ENCODE measurements at regions of chr6 and their contacts with region 1.

Region 1: GRCh38 chr6:43608310-43608763 is 20.7 kb downstream of the GTPBP2 start:
- DNase-seq: peak; percentile 30
- ATAC-seq: peak; percentile 50
- H3K4me3 Mint-ChIP-seq: no peak overlapping the region
- H3K27ac Mint-ChIP-seq: peak overlapping the region; percentile 47
- H3K4me1 Mint-ChIP-seq: peaks cover 14% of the 10 kb centered on the region
- H3K27me3 Mint-ChIP-seq: no peaks in the 10 kb centered on the region
- CTCF ChIP-seq: peak; percentile 88

Region 2: DNA sequence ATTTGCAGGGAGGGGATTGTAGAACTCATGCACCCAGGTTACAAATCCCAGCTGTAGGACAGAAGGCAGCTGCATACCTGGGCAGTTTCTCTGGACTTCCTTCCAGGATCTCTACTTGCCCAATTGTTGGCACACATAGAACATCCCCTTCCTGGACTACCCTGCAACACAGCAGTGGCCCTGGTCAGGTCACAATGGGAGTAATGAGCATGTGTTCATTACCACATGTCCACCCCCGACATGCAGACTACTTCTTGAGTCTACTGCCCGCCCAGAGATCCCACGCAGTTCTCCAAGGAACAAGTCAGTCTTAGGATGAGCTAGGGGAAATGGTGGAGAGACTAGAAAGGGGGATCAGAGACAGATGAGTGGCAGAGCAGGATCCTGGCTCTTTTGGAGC is 634.4 kb before region 1 on chr6:
- CTCF ChIA-PET with region 1: no interaction called
- POLR2A ChIA-PET with region 1: interaction called, 10 read pairs
- intact Hi-C with region 1: no loop called
- DNase-seq: no peak
- ATAC-seq: no peak
- H3K4me3 Mint-ChIP-seq: no peak overlapping the region
- H3K27ac Mint-ChIP-seq: no peak overlapping the region
- H3K4me1 Mint-ChIP-seq: peaks cover 23% of the 10 kb centered on the region
- H3K27me3 Mint-ChIP-seq: no peaks in the 10 kb centered on the region
- CTCF ChIP-seq: no peak

Region 3: DNA sequence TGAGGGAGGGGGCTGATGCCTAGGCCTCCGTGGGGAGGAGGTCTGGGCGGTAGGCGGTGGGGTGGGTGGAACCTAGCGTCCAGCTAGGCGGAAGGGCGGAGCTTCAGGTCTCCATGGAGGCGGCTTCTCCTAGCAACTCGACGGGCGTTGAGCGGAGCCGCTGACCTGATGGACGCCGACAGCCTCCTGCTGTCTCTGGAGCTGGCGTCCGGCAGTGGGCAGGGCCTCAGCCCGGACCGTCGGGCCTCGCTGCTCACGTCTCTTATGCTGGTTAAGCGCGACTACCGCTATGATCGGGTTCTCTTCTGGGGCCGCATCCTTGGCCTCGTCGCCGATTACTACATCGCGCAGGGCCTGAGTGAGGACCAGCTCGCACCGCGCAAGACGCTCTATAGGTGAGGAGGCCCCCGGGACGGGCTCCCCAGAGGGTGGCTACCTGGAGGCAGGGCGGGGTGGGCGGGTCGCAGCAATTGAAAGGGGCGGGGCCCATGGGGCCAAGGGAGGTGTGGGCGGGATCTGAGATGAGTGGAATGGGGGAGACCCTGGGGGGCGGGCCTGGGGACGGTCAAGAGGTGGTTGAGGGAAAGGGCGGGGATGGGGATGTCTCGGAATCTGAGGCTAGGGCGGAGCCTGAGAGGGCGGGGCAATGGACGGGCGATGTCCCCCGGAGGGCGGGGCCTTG is 36.7 kb after region 1 on chr6 and contains the start of gene RSPH9:
- CTCF ChIA-PET with region 1: no interaction called
- POLR2A ChIA-PET with region 1: interaction called, 3 read pairs
- intact Hi-C with region 1: loop called (anchors 2 kb)
- DNase-seq: peak; percentile 72
- ATAC-seq: peak; percentile 92
- H3K4me3 Mint-ChIP-seq: peak within 1 kb of the TSS; percentile 87
- H3K27ac Mint-ChIP-seq: peak within 1 kb of the TSS; percentile 24
- H3K4me1 Mint-ChIP-seq: peaks cover 11% of the 10 kb centered on the region
- H3K27me3 Mint-ChIP-seq: no peaks in the 10 kb centered on the region
- CTCF ChIP-seq: no peak
- total RNA-seq, gene RSPH9: 0.17 TPM in 1 of 2 replicates, not detected in the other

Region 4: DNA sequence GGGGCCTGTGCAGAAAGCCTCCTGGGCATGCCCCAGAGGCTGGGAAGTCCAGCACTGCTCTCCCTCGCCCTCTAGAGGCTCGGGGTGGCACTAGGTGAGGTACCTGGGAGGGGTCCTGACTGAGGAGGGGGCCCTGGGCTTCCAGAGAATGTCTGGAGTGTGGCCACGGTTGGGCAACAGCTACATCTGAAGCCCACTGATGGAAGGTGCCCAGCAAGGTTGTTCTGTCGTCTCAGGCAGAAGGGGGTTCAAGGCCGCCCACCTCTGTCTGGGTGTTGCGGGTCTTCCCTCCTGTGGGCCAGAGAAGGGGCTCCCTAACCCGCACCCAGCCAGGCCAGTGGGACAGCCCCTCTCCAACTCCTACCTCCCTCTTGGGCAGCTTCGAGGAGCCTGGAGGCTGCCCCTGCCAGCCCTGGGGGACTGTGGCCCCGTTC is 150.3 kb after region 1 on chr6:
- CTCF ChIA-PET with region 1: no interaction called
- POLR2A ChIA-PET with region 1: no interaction called
- intact Hi-C with region 1: loop called (anchors 1 kb)
- DNase-seq: peak; percentile 33
- ATAC-seq: peak; percentile 73
- H3K4me3 Mint-ChIP-seq: no peak overlapping the region
- H3K27ac Mint-ChIP-seq: no peak overlapping the region
- H3K4me1 Mint-ChIP-seq: peaks cover 7% of the 10 kb centered on the region
- H3K27me3 Mint-ChIP-seq: peaks cover 7% of the 10 kb centered on the region
- CTCF ChIP-seq: no peak

Region 5: GRCh38 chr6:43774776-43775534 is 166.6 kb after region 1 on chr6:
- CTCF ChIA-PET with region 1: interaction called, 7 read pairs
- POLR2A ChIA-PET with region 1: no interaction called
- intact Hi-C with region 1: loop called (anchors 1 kb)
- DNase-seq: peak; percentile 40
- ATAC-seq: no peak
- H3K4me3 Mint-ChIP-seq: peak overlapping the region; percentile 7
- H3K27ac Mint-ChIP-seq: no peak overlapping the region
- H3K4me1 Mint-ChIP-seq: peaks cover 40% of the 10 kb centered on the region
- H3K27me3 Mint-ChIP-seq: peaks cover 14% of the 10 kb centered on the region
- CTCF ChIP-seq: peak; percentile 54

Region 6: DNA sequence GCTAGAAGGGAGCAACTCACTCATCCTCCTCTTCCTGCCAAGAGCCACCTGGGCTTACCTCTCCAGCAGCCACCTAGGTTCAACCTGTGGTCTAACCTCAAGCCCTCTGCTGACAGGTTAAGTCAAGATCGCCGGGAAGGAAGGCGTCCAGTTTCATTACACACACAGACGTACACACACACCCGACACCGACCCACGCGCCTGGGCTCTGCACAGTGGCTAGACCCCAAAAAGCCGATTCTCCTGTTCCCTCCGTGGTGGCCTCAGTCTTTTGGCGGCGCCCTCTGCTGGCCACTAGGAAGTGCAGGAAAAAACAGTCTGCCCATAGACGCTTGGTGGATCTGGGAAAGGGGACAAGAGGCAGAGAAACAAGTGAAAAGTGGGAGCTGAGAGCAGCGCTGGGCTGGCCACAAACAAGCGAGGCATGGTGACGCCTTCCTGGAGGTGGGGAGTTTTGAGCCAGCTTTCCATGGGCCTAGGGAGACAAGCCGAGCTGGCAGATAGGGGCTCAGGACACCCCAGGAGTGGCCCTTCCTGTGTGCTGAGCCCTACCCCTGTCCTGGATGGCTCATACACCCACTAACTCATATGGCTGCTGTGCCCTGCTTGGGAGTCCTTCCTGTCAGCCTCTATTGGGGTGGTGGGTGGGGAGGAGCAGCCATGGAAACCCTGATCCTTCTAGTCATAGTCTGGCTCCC is 466.3 kb after region 1 on chr6:
- CTCF ChIA-PET with region 1: interaction called, 22 read pairs
- POLR2A ChIA-PET with region 1: interaction called, 7 read pairs
- intact Hi-C with region 1: loop called (anchors 1 kb)
- DNase-seq: peak; percentile 56
- ATAC-seq: peak; percentile 60
- H3K4me3 Mint-ChIP-seq: peak overlapping the region; percentile 66
- H3K27ac Mint-ChIP-seq: peak overlapping the region; percentile 7
- H3K4me1 Mint-ChIP-seq: peaks cover 20% of the 10 kb centered on the region
- H3K27me3 Mint-ChIP-seq: peaks cover 30% of the 10 kb centered on the region
- CTCF ChIP-seq: peak; percentile 21

Measured in activated B cell treated with CpG ODN at 0.5 μM for 24 hours (primary cell).